CD4-positive, alpha-beta memory T cell (primary cell): ENCODE measurements at regions of chr6 and their contacts with region 1.

Region 1: GRCh38 chr6:117118490-117118889 is 146.9 kb upstream of the VGLL2 start:
- DNase-seq: no peak
- H3K4me3 ChIP-seq: no peak overlapping the region
- H3K4me3 Mint-ChIP-seq: no peak overlapping the region
- H3K27ac ChIP-seq: no peak overlapping the region
- H3K27ac Mint-ChIP-seq: no peak overlapping the region
- H3K4me1 ChIP-seq: no peaks in the 10 kb centered on the region
- H3K4me1 Mint-ChIP-seq: no peaks in the 10 kb centered on the region
- H3K27me3 ChIP-seq: no peaks in the 10 kb centered on the region
- H3K27me3 Mint-ChIP-seq: no peaks in the 10 kb centered on the region

Region 2: GRCh38 chr6:117210279-117210678 is 91.8 kb after region 1 on chr6:
- CTCF ChIA-PET with region 1: no interaction called
- POLR2A ChIA-PET with region 1: no interaction called
- intact Hi-C with region 1: loop called (anchors 5 kb)
- DNase-seq: no peak
- H3K4me3 ChIP-seq: no peak overlapping the region
- H3K4me3 Mint-ChIP-seq: no peak overlapping the region
- H3K27ac ChIP-seq: no peak overlapping the region
- H3K27ac Mint-ChIP-seq: no peak overlapping the region
- H3K4me1 ChIP-seq: no peaks in the 10 kb centered on the region
- H3K4me1 Mint-ChIP-seq: no peaks in the 10 kb centered on the region
- H3K27me3 ChIP-seq: no peaks in the 10 kb centered on the region
- H3K27me3 Mint-ChIP-seq: no peaks in the 10 kb centered on the region